ENCODE measurements at regions of chr15 and their contacts with region 1.

Region 1: DNA sequence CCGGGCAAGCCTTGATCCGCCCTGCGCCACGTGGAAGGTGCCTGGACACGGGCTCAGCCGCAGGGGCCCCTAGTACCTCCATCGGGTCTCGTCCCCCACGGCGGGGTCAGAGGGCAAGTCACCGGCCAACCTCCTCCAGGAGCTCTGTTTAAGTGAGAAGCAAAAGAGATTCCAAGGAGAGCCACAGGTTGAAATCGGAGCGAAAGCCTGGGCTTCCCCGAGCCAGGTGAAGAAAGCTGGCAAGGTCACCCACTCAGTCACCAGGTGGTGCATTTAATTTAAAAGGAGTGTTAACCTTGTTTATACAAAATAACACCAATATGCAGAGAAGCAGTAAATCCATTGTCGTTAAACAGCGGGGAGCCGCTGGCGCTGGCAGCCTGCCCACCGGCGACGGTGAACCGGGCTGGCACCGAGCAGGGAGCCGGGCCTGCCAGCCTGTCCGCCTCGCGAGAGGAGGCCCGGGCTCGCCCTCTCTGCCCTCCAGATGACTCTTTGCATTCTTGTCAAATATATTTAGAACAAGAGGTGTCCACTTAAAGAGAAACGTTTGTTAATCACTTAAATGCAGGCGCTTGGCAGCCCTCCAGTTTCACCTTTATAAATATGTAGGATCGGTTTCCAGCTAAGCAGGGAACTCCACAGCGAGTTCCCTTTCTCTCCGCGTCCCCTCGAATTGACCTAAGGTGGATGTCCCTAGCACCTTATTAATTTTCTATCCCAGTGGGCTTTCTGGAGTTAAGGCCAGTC is 277.3 kb upstream of the NR2F2 start:
- DNase-seq: peak; percentile 9 to 42
- H3K4me3 ChIP-seq: no peak overlapping the region
- H3K4me3 Mint-ChIP-seq: peak overlapping the region; percentile 66
- H3K27ac Mint-ChIP-seq: peak overlapping the region; percentile 86
- H3K4me1 ChIP-seq: peaks cover 56% of the 10 kb centered on the region
- H3K4me1 Mint-ChIP-seq: peaks cover 20% of the 10 kb centered on the region
- H3K27me3 ChIP-seq: no peaks in the 10 kb centered on the region
- H3K27me3 Mint-ChIP-seq: no peaks in the 10 kb centered on the region
- CTCF ChIP-seq: no peak

Region 2: GRCh38 chr15:95922431-95922830 is 130.8 kb before region 1 on chr15:
- CTCF ChIA-PET with region 1: no interaction called
- POLR2A ChIA-PET with region 1: no interaction called
- intact Hi-C with region 1: loop called (anchors 5 kb)
- DNase-seq: peak; percentile 52 to 57
- H3K4me3 ChIP-seq: no peak overlapping the region
- H3K4me3 Mint-ChIP-seq: no peak overlapping the region
- H3K27ac Mint-ChIP-seq: no peak overlapping the region
- H3K4me1 ChIP-seq: no peaks in the 10 kb centered on the region
- H3K4me1 Mint-ChIP-seq: peaks cover 7% of the 10 kb centered on the region
- H3K27me3 ChIP-seq: no peaks in the 10 kb centered on the region
- H3K27me3 Mint-ChIP-seq: no peaks in the 10 kb centered on the region
- CTCF ChIP-seq: peak in 1 of 2 experiments; percentile 33

Region 3: DNA sequence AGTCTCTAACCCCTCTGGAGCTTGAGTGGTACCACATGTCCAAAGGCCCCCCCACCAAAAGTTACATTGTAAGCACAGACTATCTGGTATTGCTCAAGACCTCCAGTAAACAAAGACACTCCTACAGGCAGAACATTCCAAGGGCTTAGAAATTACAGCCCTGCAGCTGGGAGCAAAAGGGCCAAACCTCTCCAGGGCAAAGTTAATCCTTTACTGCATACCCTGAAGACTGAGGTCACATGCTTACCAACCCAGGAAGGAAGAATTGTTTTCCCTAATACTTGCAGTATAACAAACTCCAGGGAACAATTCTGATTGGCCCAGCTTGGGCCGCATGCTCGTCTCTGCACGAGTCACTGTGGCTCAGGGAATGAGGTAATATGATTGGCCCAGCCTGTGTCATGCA is 11.1 kb after region 1 on chr15:
- CTCF ChIA-PET with region 1: no interaction called
- POLR2A ChIA-PET with region 1: interaction called, 3 read pairs
- intact Hi-C with region 1: loop called (anchors 1 kb)
- DNase-seq: peak; percentile 83 to 87
- H3K4me3 ChIP-seq: no peak overlapping the region
- H3K4me3 Mint-ChIP-seq: peak overlapping the region; percentile 69
- H3K27ac Mint-ChIP-seq: peak overlapping the region; percentile 40
- H3K4me1 ChIP-seq: peaks cover 38% of the 10 kb centered on the region
- H3K4me1 Mint-ChIP-seq: peaks cover 18% of the 10 kb centered on the region
- H3K27me3 ChIP-seq: no peaks in the 10 kb centered on the region
- H3K27me3 Mint-ChIP-seq: no peaks in the 10 kb centered on the region
- CTCF ChIP-seq: no peak